ENCODE measurements at regions of chr17 and their contacts with region 1.

Region 1: DNA sequence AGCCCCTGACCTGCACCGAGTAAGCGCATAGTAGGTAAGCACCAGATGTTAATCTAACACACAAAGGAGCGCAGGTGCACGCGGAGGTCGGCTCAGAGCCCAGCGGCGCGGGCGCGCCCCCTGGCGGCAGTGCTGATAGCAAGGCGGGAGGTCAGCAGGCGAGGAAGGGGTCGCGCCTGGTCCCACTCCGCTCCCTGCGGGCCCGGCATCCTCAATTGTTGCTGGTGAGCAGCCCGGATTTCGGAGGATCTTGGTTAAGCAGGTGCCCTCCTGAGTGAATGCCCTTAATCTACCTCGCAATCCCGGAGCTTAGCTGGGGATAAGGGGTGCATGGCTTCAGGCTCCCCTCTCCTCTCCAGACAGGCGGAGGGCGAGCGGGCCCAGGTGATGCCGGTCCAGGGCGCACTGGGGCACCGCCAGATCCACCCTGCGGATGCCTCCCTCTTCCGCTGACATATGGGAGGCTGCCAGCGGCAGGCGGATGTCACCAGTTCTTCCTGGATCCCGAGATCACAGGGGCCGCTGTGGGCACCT is 4.0 kb upstream of the WNT3 start:
- DNase-seq: no peak
- H3K4me3 ChIP-seq: no peak overlapping the region
- H3K27ac ChIP-seq: no peak overlapping the region
- H3K27me3 ChIP-seq: peaks cover 0 to 58% (median 48%) of the 10 kb centered on the region in 45 donors
- CTCF ChIP-seq: peak in 40 of 56 donors; percentile 12 to 49 (median 33)

Region 2: DNA sequence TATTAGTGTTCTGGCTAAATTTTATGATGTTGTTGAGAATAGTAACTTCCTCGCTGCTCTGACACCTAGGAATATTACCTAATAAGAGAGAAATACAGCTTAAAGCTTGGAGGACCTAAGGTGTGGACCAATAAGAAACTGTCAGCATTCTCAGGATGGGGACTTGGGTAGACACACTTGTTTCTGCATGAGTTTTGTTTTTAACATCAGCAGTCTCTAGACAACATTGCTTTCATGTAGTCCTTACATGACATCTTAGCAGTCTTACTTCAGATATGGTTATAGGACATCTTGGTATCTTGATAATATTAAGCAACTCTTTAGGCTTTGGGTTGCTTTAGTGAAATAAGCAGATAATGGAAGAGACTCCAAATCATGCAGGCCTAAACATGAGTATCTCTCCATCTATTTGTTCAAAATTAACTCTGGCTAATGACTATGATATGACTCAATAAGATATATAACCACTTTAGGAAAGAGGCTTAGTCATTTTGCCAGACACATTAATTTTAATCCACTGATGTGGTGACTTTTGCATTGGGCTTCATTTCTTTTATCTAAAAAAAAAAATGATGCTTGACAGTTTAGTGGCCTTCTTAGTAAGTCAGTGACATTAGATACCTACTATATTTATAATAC is 88.5 kb before region 1 on chr17:
- intact Hi-C with region 1: loop called in 1 of 2 experiments (anchors 10 kb)
- DNase-seq: no peak
- H3K4me3 ChIP-seq: no peak overlapping the region
- H3K27ac ChIP-seq: no peak overlapping the region
- H3K27me3 ChIP-seq: no peaks in the 10 kb centered on the region
- CTCF ChIP-seq: no peak